Lower lobe of right lung (tissue), 2 donors: ENCODE measurements at regions of chr6 and their contacts with region 1.

Region 1: GRCh38 chr6:20564269-20564668 is 30.0 kb downstream of the CDKAL1 start:
- DNase-seq: no peak
- ATAC-seq: no peak
- H3K4me3 ChIP-seq: no peak overlapping the region
- H3K27ac ChIP-seq: no peak overlapping the region
- H3K4me1 ChIP-seq: peaks cover 3% of the 10 kb centered on the region
- H3K27me3 ChIP-seq: no peaks in the 10 kb centered on the region
- CTCF ChIP-seq: peak; percentile 71

Region 2: DNA sequence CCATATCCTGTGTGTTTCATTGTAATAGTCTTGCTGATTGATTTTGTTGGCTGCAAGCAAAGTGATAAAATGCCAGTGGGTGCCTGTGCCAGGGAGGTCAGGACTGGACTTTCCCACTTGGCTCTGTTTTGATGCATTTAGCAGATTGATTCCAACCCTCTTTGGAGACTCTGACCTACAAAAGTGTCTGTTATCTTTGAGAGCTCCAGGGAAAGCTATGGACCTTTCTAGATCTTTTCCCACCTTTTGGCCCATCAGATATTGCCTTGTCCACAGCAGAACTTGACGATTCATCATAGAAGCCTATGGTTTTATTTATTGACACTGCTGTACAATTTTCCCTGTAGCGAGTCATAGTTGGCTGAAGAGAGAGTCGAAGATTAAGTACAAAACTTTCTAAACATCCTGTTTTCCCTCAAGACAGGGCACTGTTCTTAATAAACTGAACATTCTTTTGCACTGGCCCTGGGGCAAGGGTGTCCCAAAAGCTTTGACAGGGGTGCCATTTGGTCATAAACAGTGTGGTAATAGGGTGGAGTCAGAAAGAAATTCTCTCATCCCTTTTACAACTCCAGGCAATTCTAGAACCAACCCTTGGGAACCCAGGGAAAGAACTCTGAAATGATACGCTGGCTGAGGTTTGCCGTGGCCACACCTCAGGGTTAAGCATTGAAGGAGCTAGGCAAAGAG is 108.9 kb before region 1 on chr6:
- intact Hi-C with region 1: no loop called
- DNase-seq: no peak
- ATAC-seq: no peak
- H3K4me3 ChIP-seq: no peak overlapping the region
- H3K27ac ChIP-seq: no peak overlapping the region
- H3K4me1 ChIP-seq: no peaks in the 10 kb centered on the region
- H3K27me3 ChIP-seq: no peaks in the 10 kb centered on the region
- CTCF ChIP-seq: no peak

Region 3: GRCh38 chr6:21589352-21590345 is 1025.4 kb after region 1 on chr6:
- intact Hi-C with region 1: loop called (anchors 10 kb)
- DNase-seq: peak; percentile 91
- ATAC-seq: peak; percentile 75 to 81
- H3K4me3 ChIP-seq: peak overlapping the region; percentile 70
- H3K27ac ChIP-seq: peak overlapping the region; percentile 81
- H3K4me1 ChIP-seq: peaks cover 18% of the 10 kb centered on the region
- H3K27me3 ChIP-seq: no peaks in the 10 kb centered on the region
- CTCF ChIP-seq: peak; percentile 92